ENCODE measurements at regions of chr16 and their contacts with region 1.

Region 1: DNA sequence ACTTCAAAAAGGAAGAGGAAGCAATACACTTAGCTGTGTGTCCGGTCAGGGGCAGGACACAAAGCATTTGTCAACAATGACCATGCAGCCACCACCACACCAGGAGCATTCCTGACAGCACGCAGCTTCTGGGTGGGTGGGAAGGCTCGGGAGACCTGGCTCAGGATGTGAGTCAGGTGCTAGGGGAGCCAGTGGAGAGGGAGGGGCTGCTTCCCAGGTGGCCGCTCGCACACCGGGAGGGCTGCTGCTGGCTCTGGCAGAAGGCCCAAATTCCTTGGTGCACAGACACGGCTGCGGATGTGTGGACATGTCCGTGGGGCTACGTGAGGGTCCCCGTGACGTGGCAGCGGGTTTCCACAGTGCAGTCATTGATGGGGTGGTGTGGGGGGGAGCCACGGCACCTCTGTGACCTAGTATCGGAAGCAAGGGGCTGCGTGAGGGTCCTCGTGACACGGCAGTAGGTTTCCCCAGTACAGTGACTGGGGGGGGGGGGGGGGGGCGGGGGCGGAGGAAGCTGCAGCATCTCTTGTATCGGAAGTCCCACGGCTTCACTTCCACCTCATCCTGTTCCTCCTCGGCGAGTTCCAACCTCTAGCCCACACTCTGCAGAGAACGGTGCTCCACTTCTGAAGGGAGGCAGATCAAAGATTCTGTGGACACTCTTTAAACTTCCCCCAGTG is 112.8 kb downstream of the ZNF778 start:
- DNase-seq: peak; percentile 70
- ATAC-seq: peak; percentile 39
- H3K4me3 ChIP-seq: no peak overlapping the region
- H3K27ac ChIP-seq: peak overlapping the region; percentile 65
- H3K4me1 ChIP-seq: peaks cover 64% of the 10 kb centered on the region
- H3K27me3 ChIP-seq: no peaks in the 10 kb centered on the region
- CTCF ChIP-seq: no peak

Region 2: DNA sequence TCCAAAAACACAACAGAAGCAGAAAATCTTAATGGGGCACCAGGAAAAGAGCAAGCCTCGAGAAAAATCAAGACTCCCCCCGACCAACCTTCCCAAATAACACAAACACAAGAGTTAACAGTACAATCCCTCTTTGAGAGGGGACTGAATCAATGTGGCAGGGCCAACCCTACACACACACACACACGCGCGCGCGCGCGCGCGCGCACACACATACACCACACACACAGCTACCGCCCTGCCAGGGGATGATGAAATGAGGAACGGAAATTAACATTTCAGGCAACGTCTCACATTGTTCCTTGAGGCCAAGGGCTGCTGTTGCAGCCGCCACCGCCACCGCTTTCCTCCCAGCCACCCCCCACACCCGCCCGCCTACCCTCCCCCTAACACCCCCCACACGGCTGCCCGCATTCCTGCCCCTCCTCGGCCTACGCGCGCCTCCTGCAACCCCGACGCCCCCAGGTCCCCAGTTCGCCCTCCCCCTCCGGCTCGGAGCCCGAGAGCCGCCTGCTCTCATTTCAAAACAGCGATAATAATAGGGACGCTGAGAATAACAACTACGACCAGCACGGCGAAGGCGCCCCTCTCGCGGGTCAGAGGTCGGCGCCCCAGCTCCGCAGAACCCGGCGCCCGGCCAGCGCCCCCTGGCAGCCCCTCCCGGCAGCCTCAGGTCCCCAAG is 158.9 kb after region 1 on chr16:
- intact Hi-C with region 1: loop called (anchors 10 kb)
- DNase-seq: peak; percentile 91
- ATAC-seq: peak; percentile 71
- H3K4me3 ChIP-seq: peak overlapping the region; percentile 90
- H3K27ac ChIP-seq: peak overlapping the region; percentile 93
- H3K4me1 ChIP-seq: peaks cover 56% of the 10 kb centered on the region
- H3K27me3 ChIP-seq: no peaks in the 10 kb centered on the region
- CTCF ChIP-seq: peak; percentile 49

Region 3: GRCh38 chr16:89602273-89602951 is 272.1 kb after region 1 on chr16:
- intact Hi-C with region 1: no loop called
- DNase-seq: no peak
- ATAC-seq: peak; percentile 63
- H3K4me3 ChIP-seq: no peak overlapping the region
- H3K27ac ChIP-seq: no peak overlapping the region
- H3K4me1 ChIP-seq: peaks cover 9% of the 10 kb centered on the region
- H3K27me3 ChIP-seq: no peaks in the 10 kb centered on the region
- CTCF ChIP-seq: no peak

Region 4: DNA sequence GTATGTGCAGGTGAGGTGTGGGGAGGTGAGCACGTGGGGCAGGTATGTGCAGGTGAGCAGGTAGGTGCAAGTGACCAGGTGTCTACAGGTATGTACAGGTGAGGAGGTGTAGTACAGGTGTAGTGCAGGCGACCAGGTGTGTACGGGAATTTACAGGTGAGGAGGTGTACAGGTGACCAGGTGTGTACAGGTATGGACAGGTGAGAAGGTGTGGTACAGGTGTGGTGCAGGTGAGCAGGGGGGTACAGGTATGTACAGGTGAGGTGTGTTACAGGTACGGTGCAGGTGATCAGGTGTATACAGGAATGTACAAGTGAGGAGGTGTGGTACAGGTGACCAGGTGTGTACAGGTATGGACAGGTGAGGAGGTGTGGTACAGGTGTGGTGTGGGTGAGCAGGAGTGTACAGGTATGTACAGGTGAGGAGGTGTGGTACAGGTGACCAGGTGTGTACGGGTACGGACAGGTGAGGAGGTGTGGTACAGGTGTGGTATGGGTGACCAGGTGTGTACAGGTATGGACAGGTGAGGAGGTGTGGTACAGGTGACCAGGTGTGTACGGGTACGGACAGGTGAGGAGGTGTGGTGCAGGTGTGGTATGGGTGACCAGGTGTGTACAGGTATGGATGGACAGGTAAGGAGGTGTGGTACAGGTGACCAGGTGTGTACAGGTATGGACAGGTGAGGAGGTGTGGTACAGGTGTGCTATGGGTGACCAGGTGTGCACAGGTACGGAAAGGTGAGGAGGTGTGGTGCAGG is 701.8 kb after region 1 on chr16:
- intact Hi-C with region 1: no loop called
- DNase-seq: no peak
- ATAC-seq: peak; percentile 54
- H3K4me3 ChIP-seq: no peak overlapping the region
- H3K27ac ChIP-seq: no peak overlapping the region
- H3K4me1 ChIP-seq: no peaks in the 10 kb centered on the region
- H3K27me3 ChIP-seq: no peaks in the 10 kb centered on the region
- CTCF ChIP-seq: no peak

Measured in upper lobe of right lung (tissue), 1 donor.